IMR-90 (cell line): ENCODE measurements at regions of chr2 and their contacts with region 1.

Region 1: GRCh38 chr2:192286093-192286701 is 91.5 kb upstream of the TMEFF2 start:
- DNase-seq: peak; percentile 63
- ATAC-seq: peak; percentile 86
- H3K4me3 ChIP-seq: no peak overlapping the region
- H3K27ac ChIP-seq: no peak overlapping the region
- H3K4me1 ChIP-seq: no peaks in the 10 kb centered on the region
- H3K27me3 ChIP-seq: no peaks in the 10 kb centered on the region; the same call in 1 of the 2 replicates
- CTCF ChIP-seq: peak; percentile 76
- POLR2A ChIP-seq: no peak
- RAD21 ChIP-seq: peak; percentile 86

Region 2: GRCh38 chr2:191555092-191555742 is 731.0 kb before region 1 on chr2:
- CTCF ChIA-PET with region 1: no interaction called
- POLR2A ChIA-PET with region 1: no interaction called
- dilution Hi-C with region 1: no loop called
- in situ Hi-C with region 1: loop called (anchors 10 kb)
- intact Hi-C with region 1: no loop called
- DNase-seq: peak; percentile 74
- ATAC-seq: peak; percentile 93
- H3K4me3 ChIP-seq: no peak overlapping the region
- H3K27ac ChIP-seq: no peak overlapping the region
- H3K4me1 ChIP-seq: no peaks in the 10 kb centered on the region
- H3K27me3 ChIP-seq: peaks cover 3% of the 10 kb centered on the region; the same call in 1 of the 2 replicates
- CTCF ChIP-seq: peak; percentile 86
- POLR2A ChIP-seq: no peak
- RAD21 ChIP-seq: peak; percentile 90

Region 3: DNA sequence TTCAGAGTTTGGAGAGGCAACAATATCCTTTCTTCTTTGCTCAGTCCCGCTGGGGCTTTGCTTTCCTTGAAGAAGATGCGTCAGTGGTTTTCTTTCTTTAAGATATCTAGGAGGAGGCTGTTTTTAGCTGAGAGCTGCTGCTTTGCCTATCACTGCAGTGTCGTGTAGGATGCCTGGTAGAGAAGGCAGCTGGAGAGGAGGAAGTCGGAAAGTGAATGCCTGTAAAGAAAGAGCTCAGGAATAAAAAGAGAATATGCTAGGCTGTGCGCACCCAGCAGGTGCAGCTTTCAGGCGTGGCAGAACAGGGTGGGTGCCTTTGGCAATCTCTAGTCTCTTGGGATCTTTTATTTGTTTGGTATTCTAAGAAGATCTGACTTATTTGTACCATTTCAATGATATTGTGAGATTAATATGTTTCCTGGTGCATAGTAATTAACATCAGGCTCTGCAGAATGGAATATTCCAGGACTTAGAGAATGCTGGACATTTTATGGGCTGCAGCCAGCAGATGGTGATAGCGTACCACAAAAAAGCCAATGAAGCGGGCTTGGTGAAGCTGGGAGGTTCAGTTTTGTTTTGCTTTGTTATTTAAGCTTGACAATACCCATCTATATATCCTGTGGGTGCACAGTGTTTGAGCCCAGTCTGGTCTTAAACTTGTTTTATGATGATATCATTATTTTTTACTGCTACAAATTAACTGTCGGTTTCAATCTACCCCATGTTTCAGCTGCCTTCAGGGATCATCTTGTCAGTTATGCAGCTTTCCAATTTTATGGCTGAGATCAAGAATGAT is 474.2 kb before region 1 on chr2:
- CTCF ChIA-PET with region 1: no interaction called
- POLR2A ChIA-PET with region 1: no interaction called
- dilution Hi-C with region 1: no loop called
- in situ Hi-C with region 1: loop called (anchors 10 kb)
- intact Hi-C with region 1: loop called (anchors 1 kb)
- DNase-seq: peak; percentile 69
- ATAC-seq: peak; percentile 97
- H3K4me3 ChIP-seq: no peak overlapping the region
- H3K27ac ChIP-seq: no peak overlapping the region
- H3K4me1 ChIP-seq: no peaks in the 10 kb centered on the region
- H3K27me3 ChIP-seq: no peaks in the 10 kb centered on the region
- CTCF ChIP-seq: peak; percentile 95
- POLR2A ChIP-seq: 0 out of 2 replicates have a peak, but pooled peaks have one; percentile 30
- RAD21 ChIP-seq: peak; percentile 97

Region 4: GRCh38 chr2:191869178-191869577 is 417.0 kb before region 1 on chr2:
- CTCF ChIA-PET with region 1: no interaction called
- POLR2A ChIA-PET with region 1: no interaction called
- dilution Hi-C with region 1: no loop called
- in situ Hi-C with region 1: no loop called
- intact Hi-C with region 1: loop called (anchors 5 kb)
- DNase-seq: peak; percentile 30
- ATAC-seq: no peak
- H3K4me3 ChIP-seq: no peak overlapping the region
- H3K27ac ChIP-seq: no peak overlapping the region
- H3K4me1 ChIP-seq: peaks cover 22% of the 10 kb centered on the region
- H3K27me3 ChIP-seq: no peaks in the 10 kb centered on the region
- CTCF ChIP-seq: peak; percentile 41
- POLR2A ChIP-seq: no peak
- RAD21 ChIP-seq: peak; percentile 50

Region 5: GRCh38 chr2:192029089-192029488 is 257.1 kb before region 1 on chr2:
- CTCF ChIA-PET with region 1: no interaction called
- POLR2A ChIA-PET with region 1: no interaction called
- dilution Hi-C with region 1: no loop called
- in situ Hi-C with region 1: no loop called
- intact Hi-C with region 1: no loop called
- DNase-seq: peak; percentile 58
- ATAC-seq: peak; percentile 60; the same call in 1 of the 2 replicates
- H3K4me3 ChIP-seq: no peak overlapping the region
- H3K27ac ChIP-seq: no peak overlapping the region
- H3K4me1 ChIP-seq: peaks cover 3% of the 10 kb centered on the region
- H3K27me3 ChIP-seq: no peaks in the 10 kb centered on the region
- CTCF ChIP-seq: peak; percentile 24; the same call in 1 of the 2 replicates
- POLR2A ChIP-seq: no peak
- RAD21 ChIP-seq: no peak

Region 6: DNA sequence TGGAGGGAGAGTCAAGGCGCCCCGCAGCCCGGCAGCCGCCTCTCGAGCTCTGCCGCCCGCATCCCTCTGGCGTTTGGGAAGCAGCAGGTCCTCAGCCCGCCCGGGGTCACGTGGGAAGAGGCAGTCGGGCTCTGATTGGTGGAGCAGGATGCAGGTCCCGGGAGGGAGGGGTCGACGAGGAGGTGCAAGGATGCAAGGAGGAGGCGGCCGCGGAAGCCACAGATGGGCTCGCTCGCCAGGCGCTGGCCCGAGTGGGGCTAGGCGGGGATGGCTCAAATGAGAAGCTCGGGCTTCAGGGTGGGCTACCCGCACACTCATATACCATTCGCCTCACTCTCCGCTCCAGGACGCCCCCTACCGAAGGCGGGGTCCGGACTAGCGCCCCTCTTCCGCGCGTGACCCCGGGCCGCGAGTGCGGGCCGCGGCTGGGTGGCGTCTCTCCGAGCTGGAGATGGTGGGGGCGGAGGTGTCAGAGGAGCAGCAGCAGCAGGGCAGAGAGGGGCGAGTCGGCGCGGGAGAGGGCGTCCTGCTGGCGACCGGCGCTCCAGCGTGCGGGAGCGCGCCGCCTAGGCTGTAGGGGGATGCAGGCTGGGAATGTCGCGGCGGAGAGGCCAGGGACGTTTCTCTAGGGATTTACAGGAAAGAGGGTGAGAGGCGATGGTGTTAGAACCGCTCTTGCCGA is 91.2 kb before region 1 on chr2 and contains the start of gene TMEFF2:
- CTCF ChIA-PET with region 1: interaction called, 3 read pairs
- POLR2A ChIA-PET with region 1: no interaction called
- dilution Hi-C with region 1: no loop called
- in situ Hi-C with region 1: loop called (anchors 10 kb)
- intact Hi-C with region 1: loop called (anchors 1 kb)
- DNase-seq: peak; percentile 83
- ATAC-seq: peak; percentile 86
- H3K4me3 ChIP-seq: peak within 1 kb of the TSS; percentile 61
- H3K27ac ChIP-seq: no peak within 1 kb of the TSS
- H3K4me1 ChIP-seq: no peaks in the 10 kb centered on the region
- H3K27me3 ChIP-seq: peaks cover 55% of the 10 kb centered on the region
- CTCF ChIP-seq: peak; percentile 10; the same call in 1 of the 2 replicates
- POLR2A ChIP-seq: peak; percentile 23; the same call in 1 of the 2 replicates
- RAD21 ChIP-seq: no peak
- total RNA-seq, gene TMEFF2: 1.3 and 1.4 TPM in 2 replicates

Region 7: DNA sequence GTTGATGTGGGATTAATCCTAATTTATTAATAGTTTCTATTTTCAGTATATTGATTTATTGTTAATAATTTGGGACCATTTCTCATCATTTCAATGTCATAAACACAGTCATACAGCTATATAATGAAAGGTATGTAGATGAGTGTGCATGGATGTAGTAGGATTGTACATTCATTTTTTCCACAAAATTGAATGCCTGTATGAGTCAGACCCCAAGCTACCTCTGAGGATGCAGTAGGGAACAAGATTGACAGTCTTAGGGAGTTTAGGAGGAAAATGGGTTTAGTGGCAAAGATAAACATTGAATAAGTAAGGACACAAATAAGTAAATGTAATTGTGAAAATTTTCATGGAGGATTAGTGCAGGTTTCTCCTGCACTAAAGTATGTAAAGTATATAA is 77.3 kb before region 1 on chr2:
- CTCF ChIA-PET with region 1: no interaction called
- POLR2A ChIA-PET with region 1: no interaction called
- dilution Hi-C with region 1: no loop called
- in situ Hi-C with region 1: loop called (anchors 10 kb)
- intact Hi-C with region 1: no loop called
- DNase-seq: peak; percentile 33
- ATAC-seq: no peak
- H3K4me3 ChIP-seq: no peak overlapping the region
- H3K27ac ChIP-seq: no peak overlapping the region
- H3K4me1 ChIP-seq: no peaks in the 10 kb centered on the region
- H3K27me3 ChIP-seq: no peaks in the 10 kb centered on the region
- CTCF ChIP-seq: no peak
- POLR2A ChIP-seq: no peak
- RAD21 ChIP-seq: no peak